Natural killer cell (primary cell): ENCODE measurements at regions of chr13 and their contacts with region 1.

Region 1: GRCh38 chr13:33542283-33543088 is 256.9 kb upstream of the STARD13 start:
- DNase-seq: peak; percentile 99
- ATAC-seq: peak; percentile 82 to 94 (median 83)
- H3K4me3 ChIP-seq: peak overlapping the region; percentile 71
- H3K4me3 Mint-ChIP-seq: peak overlapping the region; percentile 96
- H3K27ac ChIP-seq: peak overlapping the region; percentile 100
- H3K27ac Mint-ChIP-seq: peak overlapping the region; percentile 99 to 100
- H3K4me1 ChIP-seq: peaks cover 6% of the 10 kb centered on the region
- H3K4me1 Mint-ChIP-seq: peaks cover 31 to 36% of the 10 kb centered on the region in 2 donors
- H3K27me3 ChIP-seq: no peaks in the 10 kb centered on the region
- H3K27me3 Mint-ChIP-seq: no peaks in the 10 kb centered on the region
- CTCF ChIP-seq: peak; percentile 62

Region 2: DNA sequence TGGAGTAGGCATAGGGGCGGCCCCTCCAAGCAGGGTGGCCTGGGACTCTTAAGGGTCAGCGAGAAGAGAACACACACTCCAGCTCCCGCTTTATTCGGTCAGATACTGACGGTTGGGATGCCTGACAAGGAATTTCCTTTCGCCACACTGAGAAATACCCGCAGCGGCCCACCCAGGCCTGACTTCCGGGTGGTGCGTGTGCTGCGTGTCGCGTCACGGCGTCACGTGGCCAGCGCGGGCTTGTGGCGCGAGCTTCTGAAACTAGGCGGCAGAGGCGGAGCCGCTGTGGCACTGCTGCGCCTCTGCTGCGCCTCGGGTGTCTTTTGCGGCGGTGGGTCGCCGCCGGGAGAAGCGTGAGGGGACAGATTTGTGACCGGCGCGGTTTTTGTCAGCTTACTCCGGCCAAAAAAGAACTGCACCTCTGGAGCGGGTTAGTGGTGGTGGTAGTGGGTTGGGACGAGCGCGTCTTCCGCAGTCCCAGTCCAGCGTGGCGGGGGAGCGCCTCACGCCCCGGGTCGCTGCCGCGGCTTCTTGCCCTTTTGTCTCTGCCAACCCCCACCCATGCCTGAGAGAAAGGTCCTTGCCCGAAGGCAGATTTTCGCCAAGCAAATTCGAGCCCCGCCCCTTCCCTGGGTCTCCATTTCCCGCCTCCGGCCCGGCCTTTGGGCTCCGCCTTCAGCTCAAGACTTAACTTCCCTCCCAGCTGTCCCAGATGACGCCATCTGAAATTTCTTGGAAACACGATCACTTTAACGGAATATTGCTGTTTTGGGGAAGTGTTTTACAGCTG is 1227.1 kb before region 1 on chr13 and contains the starts of genes BRCA2 and ZAR1L:
- intact Hi-C with region 1: loop called (anchors 2 kb)
- DNase-seq: peak; percentile 87 to 95
- ATAC-seq: peak; percentile 80 to 93 (median 86)
- H3K4me3 ChIP-seq: peak within 1 kb of the TSS; percentile 87
- H3K4me3 Mint-ChIP-seq: peak within 1 kb of the TSS; percentile 98
- H3K27ac ChIP-seq: peak within 1 kb of the TSS; percentile 99
- H3K27ac Mint-ChIP-seq: peak within 1 kb of the TSS; percentile 98 to 100
- H3K4me1 ChIP-seq: peaks cover 18% of the 10 kb centered on the region
- H3K4me1 Mint-ChIP-seq: peaks cover 14 to 21% of the 10 kb centered on the region in 2 donors
- H3K27me3 ChIP-seq: no peaks in the 10 kb centered on the region
- H3K27me3 Mint-ChIP-seq: no peaks in the 10 kb centered on the region
- CTCF ChIP-seq: no peak
- total RNA-seq, gene BRCA2: 3.6 to 4.3 (median 3.6) TPM
- total RNA-seq, gene ZAR1L: 0.23 TPM in 1 of 3 donors, not detected in the others

Region 3: GRCh38 chr13:32538621-32539246 is 1003.8 kb before region 1 on chr13 and contains the start of gene N4BP2L2:
- intact Hi-C with region 1: loop called (anchors 1 kb)
- DNase-seq: peak; percentile 85 to 97
- ATAC-seq: peak; percentile 94 to 98 (median 96)
- H3K4me3 ChIP-seq: peak within 1 kb of the TSS; percentile 96
- H3K4me3 Mint-ChIP-seq: peak within 1 kb of the TSS; percentile 99
- H3K27ac ChIP-seq: peak within 1 kb of the TSS; percentile 99
- H3K27ac Mint-ChIP-seq: peak within 1 kb of the TSS; percentile 98 to 99
- H3K4me1 ChIP-seq: peaks cover 15% of the 10 kb centered on the region
- H3K4me1 Mint-ChIP-seq: peaks cover 48 to 50% of the 10 kb centered on the region in 2 donors
- H3K27me3 ChIP-seq: no peaks in the 10 kb centered on the region
- H3K27me3 Mint-ChIP-seq: peaks cover 0 to 4% of the 10 kb centered on the region in 2 donors
- CTCF ChIP-seq: no peak
- total RNA-seq, gene N4BP2L2: 195 to 247 (median 221) TPM

Region 4: DNA sequence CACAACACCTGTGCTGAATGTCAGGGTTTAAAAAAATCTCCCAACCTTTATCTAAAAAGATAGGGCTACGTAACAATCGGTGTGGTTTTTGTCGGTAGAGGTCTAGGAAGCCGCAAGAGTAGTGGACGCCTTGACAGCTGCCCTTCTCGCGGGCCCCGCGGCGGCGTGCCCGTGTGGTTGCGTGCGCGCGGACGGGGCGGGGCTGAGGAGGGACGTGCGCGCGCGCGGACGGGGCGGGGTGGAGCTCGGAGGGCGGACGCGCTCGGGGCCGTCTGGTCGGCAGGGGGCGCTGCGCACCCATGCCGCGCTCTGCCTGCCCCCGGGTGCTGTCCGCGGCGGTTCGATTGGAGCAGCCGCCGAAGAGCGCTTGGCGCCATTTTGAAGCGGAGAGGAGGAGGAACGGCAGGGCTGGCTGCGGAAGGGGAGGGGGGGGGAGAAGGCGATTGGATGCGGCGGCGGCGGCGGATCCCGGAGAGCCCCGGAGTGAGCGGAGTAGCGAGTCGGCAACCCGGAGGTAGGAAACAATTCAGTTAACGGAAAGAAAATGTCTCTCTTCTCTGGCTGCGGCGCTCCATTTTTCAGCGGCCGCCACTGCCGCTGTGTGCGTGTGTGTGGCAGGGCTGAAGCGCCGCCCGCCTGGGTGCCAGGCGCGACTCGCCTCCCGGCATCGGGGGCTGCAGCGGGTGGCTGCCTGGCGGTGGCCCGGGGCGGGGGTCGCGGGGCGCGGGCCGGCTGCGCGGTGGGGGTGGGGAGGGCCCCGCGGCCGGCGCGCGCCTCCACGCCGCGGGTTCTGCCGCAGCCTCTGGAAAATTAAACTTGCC is 956.2 kb before region 1 on chr13 and contains the start of gene PDS5B:
- intact Hi-C with region 1: loop called (anchors 1 kb)
- DNase-seq: peak; percentile 97 to 98
- ATAC-seq: peak; percentile 88 to 98 (median 91)
- H3K4me3 ChIP-seq: peak within 1 kb of the TSS; percentile 88
- H3K4me3 Mint-ChIP-seq: peak within 1 kb of the TSS; percentile 97
- H3K27ac ChIP-seq: peak within 1 kb of the TSS; percentile 88
- H3K27ac Mint-ChIP-seq: peak within 1 kb of the TSS; percentile 94 to 95
- H3K4me1 ChIP-seq: peaks cover 9% of the 10 kb centered on the region
- H3K4me1 Mint-ChIP-seq: peaks cover 40 to 41% of the 10 kb centered on the region in 2 donors
- H3K27me3 ChIP-seq: no peaks in the 10 kb centered on the region
- H3K27me3 Mint-ChIP-seq: peaks cover 0 to 3% of the 10 kb centered on the region in 2 donors
- CTCF ChIP-seq: peak; percentile 87
- total RNA-seq, gene PDS5B: 59.4 to 70.6 (median 64.7) TPM

Region 5: DNA sequence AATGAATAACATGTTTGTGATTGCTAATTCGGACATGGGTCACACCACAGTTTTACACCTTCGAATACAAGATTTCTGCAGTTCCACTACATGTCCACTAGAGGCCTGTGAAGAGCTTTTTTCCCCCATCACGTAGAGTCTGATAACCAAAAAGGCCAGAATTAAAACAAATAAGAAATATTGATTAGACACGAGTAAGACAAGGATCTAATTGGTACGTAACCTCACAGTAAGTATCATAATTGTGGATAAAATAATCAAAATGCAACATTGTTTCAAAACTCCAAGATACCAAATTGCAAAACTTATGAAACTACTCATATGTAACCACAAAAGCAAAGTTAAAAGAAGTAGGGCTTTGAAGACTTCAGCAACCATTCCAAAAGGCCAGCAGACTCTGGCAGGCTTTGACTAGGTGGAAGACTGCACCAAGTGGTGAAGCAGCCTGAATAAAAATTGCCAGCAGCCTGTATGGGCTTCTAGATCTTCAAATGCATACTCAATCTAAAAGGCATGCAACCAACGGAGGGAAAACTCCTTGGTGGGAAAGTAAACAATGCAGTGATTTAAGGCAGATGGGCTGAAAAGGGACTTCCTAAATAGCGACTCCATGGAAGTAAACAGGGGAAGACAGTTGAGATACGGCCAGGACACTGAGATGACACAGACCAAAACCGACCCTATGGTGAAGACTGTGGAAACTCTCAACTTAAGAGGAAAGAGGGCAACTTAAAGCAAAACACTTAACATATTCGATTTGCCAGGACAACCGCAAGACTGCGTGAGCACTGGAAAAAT is 313.6 kb before region 1 on chr13:
- intact Hi-C with region 1: loop called (anchors 5 kb)
- DNase-seq: peak in 1 of 2 donors; percentile 66
- ATAC-seq: peak; percentile 52 to 67 (median 63)
- H3K4me3 ChIP-seq: no peak overlapping the region
- H3K4me3 Mint-ChIP-seq: no peak overlapping the region
- H3K27ac ChIP-seq: no peak overlapping the region
- H3K27ac Mint-ChIP-seq: no peak overlapping the region
- H3K4me1 ChIP-seq: no peaks in the 10 kb centered on the region
- H3K4me1 Mint-ChIP-seq: no peaks in the 10 kb centered on the region
- H3K27me3 ChIP-seq: no peaks in the 10 kb centered on the region
- H3K27me3 Mint-ChIP-seq: peaks cover 9 to 11% of the 10 kb centered on the region in 2 donors
- CTCF ChIP-seq: peak; percentile 79

Region 6: GRCh38 chr13:33817901-33818706 is 275.6 kb after region 1 on chr13 and contains the start of gene RFC3:
- intact Hi-C with region 1: loop called (anchors 2 kb)
- DNase-seq: peak; percentile 89 to 96
- ATAC-seq: peak; percentile 92 to 94 (median 93)
- H3K4me3 ChIP-seq: peak within 1 kb of the TSS; percentile 81
- H3K4me3 Mint-ChIP-seq: peak within 1 kb of the TSS; percentile 95
- H3K27ac ChIP-seq: peak within 1 kb of the TSS; percentile 44
- H3K27ac Mint-ChIP-seq: peak within 1 kb of the TSS; percentile 93 to 94
- H3K4me1 ChIP-seq: peaks cover 9% of the 10 kb centered on the region
- H3K4me1 Mint-ChIP-seq: peaks cover 14 to 19% of the 10 kb centered on the region in 2 donors
- H3K27me3 ChIP-seq: no peaks in the 10 kb centered on the region
- H3K27me3 Mint-ChIP-seq: peaks cover 10 to 14% of the 10 kb centered on the region in 2 donors
- CTCF ChIP-seq: no peak
- total RNA-seq, gene RFC3: 5.5 to 7.0 (median 6.8) TPM